ENCODE measurements at regions of chr12 and their contacts with region 1.

Region 1: GRCh38 chr12:14613718-14614117 is 46.0 kb upstream of the PLBD1 start:
- DNase-seq: no peak
- H3K4me3 ChIP-seq: no peak overlapping the region
- H3K27ac ChIP-seq: no peak overlapping the region
- H3K4me1 ChIP-seq: no peaks in the 10 kb centered on the region
- H3K27me3 ChIP-seq: no peaks in the 10 kb centered on the region
- CTCF ChIP-seq: no peak

Region 2: GRCh38 chr12:14567351-14568162 is 46.2 kb before region 1 on chr12 and contains the start of gene PLBD1:
- intact Hi-C with region 1: loop called (anchors 5 kb)
- DNase-seq: peak; percentile 72
- H3K4me3 ChIP-seq: peak within 1 kb of the TSS; percentile 59
- H3K27ac ChIP-seq: peak within 1 kb of the TSS; percentile 81
- H3K4me1 ChIP-seq: peaks cover 5% of the 10 kb centered on the region
- H3K27me3 ChIP-seq: no peaks in the 10 kb centered on the region
- CTCF ChIP-seq: no peak
- total RNA-seq, gene PLBD1: 85.0 to 91.7 TPM

Measured in colonic mucosa (tissue), 4 donors.